Activated CD8-positive, alpha-beta memory T cell treated with anti-CD3 and anti-CD28 coated beads, Interleukin-2, amount 10 ng/mL, durations not matched to agents 7 days and 5 days (primary cell): ENCODE measurements at regions of chr2 and their contacts with region 1.

Region 1: DNA sequence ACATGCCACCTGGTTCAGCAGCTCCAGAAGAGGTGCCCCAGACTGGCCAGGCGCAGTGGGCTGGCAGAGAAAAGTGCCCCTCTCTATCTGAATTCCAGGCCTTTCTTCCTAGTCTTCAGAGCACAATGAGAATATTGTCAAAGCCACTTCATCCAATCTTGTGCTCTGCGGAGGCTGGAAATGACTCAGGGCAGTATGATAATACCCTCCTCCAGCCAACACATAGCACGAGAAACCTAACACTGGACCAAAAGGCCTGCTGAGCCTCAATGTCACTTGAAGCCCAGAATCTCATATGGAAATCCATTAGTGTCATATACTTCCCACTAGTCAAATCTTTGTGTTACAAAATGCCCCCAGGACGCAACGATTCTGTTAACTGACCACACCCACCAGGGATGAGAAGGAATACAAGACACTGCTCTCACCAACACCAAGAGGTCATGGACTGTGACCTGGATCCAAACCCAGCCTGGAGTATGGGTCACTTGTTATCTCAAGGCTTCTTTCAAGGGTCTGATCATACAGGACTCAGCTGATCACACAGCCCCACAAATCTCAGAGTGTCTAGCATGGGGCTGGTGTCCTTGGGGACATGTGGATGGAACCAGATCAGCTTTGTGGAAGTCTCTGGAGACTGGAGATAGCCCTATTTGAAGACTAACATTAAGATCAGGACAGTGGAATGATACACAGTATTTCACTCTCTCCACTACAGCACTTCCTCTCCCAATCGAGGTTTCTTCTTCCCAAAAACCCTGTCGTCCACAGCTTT is 10.1 kb downstream of the KIF3C start:
- DNase-seq: no peak
- ATAC-seq: no peak
- H3K4me3 Mint-ChIP-seq: no peak overlapping the region
- H3K27ac Mint-ChIP-seq: no peak overlapping the region
- H3K4me1 Mint-ChIP-seq: peaks cover 9% of the 10 kb centered on the region
- H3K27me3 Mint-ChIP-seq: no peaks in the 10 kb centered on the region

Region 2: DNA sequence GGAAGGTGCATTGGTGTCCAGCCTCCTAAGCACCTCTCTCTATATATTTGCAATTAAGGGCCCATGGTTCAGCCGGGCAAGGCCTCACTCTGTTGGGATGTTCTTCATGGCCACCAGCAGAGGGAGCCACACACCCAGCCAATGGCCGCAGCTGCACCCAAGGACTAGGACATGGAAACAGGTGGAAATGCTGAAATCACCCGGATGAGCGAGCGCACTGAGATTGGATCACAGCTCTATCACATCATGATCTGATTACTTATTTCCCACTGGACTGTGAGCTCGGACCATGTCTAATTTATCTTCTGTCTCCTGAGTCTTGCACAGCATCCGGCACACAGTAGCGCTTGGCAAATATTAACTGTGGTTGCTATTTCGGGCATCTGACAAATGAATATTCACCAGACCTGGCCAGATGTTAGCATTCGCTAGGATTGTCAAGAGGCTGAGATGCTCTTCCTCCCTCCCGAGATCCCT is 21.1 kb before region 1 on chr2:
- CTCF ChIA-PET with region 1: interaction called, 11 read pairs
- DNase-seq: peak; percentile 79
- ATAC-seq: peak; percentile 95
- H3K4me3 Mint-ChIP-seq: no peak overlapping the region
- H3K27ac Mint-ChIP-seq: no peak overlapping the region
- H3K4me1 Mint-ChIP-seq: peaks cover 6% of the 10 kb centered on the region
- H3K27me3 Mint-ChIP-seq: no peaks in the 10 kb centered on the region

Region 3: DNA sequence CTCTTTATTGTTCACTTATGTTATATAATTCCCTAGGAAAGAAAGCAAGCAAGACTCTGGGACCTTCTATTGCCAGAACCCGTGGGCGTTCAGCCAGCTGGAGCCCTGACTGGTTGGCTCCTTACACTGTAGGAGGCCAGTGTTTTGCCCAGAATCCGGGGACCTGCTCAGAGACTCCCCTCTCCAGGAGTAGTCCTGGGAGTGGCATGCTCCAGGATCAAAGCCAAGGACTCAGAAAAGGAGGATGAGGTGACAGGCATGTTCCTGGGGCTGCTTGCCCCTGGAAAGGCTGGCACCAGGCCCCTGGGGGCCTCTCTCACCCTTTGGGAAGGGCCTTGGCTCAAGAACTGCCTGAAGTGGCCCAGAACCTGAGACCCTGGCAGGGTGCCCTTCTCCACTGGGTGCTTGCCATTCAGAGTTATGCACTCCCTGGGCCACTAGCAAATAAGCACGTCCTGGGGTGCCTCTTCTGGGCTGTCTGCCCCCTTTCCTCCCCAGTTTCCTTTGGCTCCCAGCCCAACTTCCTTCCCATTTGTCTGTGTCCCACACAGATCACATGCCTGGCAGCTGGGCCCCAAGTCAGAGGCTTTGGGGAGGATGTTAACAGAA is 29.6 kb after region 1 on chr2:
- CTCF ChIA-PET with region 1: no interaction called
- DNase-seq: no peak
- ATAC-seq: no peak
- H3K4me3 Mint-ChIP-seq: no peak overlapping the region
- H3K27ac Mint-ChIP-seq: no peak overlapping the region
- H3K4me1 Mint-ChIP-seq: peaks cover 7% of the 10 kb centered on the region
- H3K27me3 Mint-ChIP-seq: peaks cover 5% of the 10 kb centered on the region